PC-3 (cell line): ENCODE measurements at regions of chr19 and their contacts with region 1.

Region 1: DNA sequence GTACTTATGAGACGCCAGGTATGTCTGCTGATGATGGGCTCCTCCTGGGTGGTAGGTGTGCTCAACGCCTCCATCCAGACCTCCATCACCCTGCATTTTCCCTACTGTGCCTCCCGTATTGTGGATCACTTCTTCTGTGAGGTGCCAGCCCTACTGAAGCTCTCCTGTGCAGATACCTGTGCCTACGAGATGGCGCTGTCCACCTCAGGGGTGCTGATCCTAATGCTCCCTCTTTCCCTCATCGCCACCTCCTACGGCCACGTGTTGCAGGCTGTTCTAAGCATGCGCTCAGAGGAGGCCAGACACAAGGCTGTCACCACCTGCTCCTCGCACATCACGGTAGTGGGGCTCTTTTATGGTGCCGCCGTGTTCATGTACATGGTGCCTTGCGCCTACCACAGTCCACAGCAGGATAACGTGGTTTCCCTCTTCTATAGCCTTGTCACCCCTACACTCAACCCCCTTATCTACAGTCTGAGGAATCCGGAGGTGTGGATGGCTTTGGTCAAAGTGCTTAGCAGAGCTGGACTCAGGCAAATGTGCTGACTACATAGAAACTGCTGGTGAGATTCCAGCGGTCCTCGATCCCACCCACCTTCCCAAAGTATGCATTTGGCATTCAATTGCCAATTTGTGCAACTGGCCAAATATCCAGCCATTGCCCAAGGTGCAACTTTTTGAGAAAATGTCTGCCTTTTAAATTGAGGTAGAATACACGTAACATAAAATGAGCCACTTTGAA is 10.2 kb downstream of the OR2Z1 start:
- DNase-seq: peak; percentile 17
- ATAC-seq: no peak
- H3K4me3 ChIP-seq: no peak overlapping the region
- H3K27ac ChIP-seq: no peak overlapping the region
- H3K4me1 ChIP-seq: no peaks in the 10 kb centered on the region
- H3K27me3 ChIP-seq: peaks cover 22% of the 10 kb centered on the region
- CTCF ChIP-seq: no peak

Region 2: GRCh38 chr19:8794823-8795222 is 63.2 kb after region 1 on chr19:
- CTCF ChIA-PET with region 1: no interaction called
- POLR2A ChIA-PET with region 1: interaction called, 20 read pairs
- intact Hi-C with region 1: no loop called
- DNase-seq: no peak
- ATAC-seq: no peak
- H3K4me3 ChIP-seq: no peak overlapping the region; the same call in 1 of the 2 replicates
- H3K27ac ChIP-seq: no peak overlapping the region
- H3K4me1 ChIP-seq: no peaks in the 10 kb centered on the region
- H3K27me3 ChIP-seq: peaks cover 24% of the 10 kb centered on the region
- CTCF ChIP-seq: no peak